ENCODE measurements at regions of chr6 and their contacts with region 1.

Region 1: GRCh38 chr6:100311707-100312251 is 152.9 kb downstream of the SIM1 start:
- DNase-seq: no peak
- H3K4me3 ChIP-seq: no peak overlapping the region
- H3K27ac ChIP-seq: no peak overlapping the region
- H3K4me1 ChIP-seq: no peaks in the 10 kb centered on the region
- CTCF ChIP-seq: no peak

Region 2: DNA sequence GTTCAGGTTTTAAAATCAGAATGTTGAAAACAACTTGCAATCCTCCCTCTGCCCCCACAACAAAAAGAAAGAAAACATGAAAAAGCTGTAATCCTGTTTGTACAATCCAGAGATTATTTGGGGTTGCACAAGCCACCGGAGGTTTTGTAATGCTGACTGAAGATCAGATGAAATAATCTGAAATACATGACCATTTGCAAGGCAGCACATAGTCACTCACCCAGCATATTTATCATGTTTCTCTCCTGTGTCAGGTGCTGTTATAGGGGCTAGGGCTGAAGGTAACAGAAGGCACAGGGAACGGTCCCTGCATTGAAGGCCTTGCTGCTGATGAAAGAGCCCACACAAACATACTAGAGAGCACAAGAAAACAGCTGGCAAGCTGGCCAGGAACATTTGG is 67.6 kb after region 1 on chr6:
- CTCF ChIA-PET with region 1: no interaction called
- POLR2A ChIA-PET with region 1: no interaction called
- intact Hi-C with region 1: loop called (anchors 2 kb)
- DNase-seq: no peak
- H3K4me3 ChIP-seq: no peak overlapping the region
- H3K27ac ChIP-seq: no peak overlapping the region
- H3K4me1 ChIP-seq: no peaks in the 10 kb centered on the region
- CTCF ChIP-seq: no peak